ENCODE measurements at regions of chr5 and their contacts with region 1.

Region 1: DNA sequence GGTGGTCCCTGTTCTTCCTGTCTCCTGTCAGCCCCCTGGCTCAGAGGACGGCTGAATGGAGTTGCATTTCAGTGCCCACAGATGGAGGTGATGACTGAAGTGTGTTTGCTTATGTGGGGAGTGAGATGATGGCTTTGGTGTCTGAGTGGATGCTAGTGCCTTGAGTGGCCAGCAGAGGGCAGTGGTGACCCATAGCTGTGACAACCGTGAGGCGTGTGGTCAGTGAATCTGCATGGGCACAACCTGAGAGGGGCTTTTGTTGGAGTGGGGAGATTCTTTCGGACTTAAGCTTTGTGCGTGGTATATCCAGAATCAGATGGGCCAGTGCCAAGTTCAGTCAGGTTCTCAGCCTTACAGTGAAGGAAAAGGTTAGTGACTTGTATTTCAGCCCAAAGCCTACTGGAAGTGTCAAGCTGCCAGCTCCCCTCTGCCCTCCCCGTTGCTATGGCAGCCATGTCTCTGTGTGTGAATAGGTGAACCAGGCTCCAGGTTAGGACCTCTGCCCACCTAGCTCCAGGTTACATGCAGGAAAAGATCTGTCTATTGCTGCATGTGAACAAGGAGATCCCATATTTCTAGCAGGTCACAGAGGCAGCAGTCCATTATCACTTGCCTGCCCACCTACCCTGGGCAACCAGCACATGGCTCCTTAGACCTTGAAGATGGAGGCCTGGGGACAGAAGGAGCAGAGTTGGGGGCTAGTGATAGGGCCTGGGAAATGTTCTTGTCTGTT is 14.7 kb upstream of the CXXC5 start:
- DNase-seq: peak; percentile 79 to 90 (median 89)
- H3K4me3 ChIP-seq: peak overlapping the region in 1 of 3 donors; percentile 24
- H3K27ac ChIP-seq: peak overlapping the region in 1 of 2 donors; percentile 0
- H3K4me1 ChIP-seq: peaks cover 13 to 30% (median 17%) of the 10 kb centered on the region in 3 donors
- H3K27me3 ChIP-seq: no peaks in the 10 kb centered on the region
- CTCF ChIP-seq: peak; percentile 100

Region 2: DNA sequence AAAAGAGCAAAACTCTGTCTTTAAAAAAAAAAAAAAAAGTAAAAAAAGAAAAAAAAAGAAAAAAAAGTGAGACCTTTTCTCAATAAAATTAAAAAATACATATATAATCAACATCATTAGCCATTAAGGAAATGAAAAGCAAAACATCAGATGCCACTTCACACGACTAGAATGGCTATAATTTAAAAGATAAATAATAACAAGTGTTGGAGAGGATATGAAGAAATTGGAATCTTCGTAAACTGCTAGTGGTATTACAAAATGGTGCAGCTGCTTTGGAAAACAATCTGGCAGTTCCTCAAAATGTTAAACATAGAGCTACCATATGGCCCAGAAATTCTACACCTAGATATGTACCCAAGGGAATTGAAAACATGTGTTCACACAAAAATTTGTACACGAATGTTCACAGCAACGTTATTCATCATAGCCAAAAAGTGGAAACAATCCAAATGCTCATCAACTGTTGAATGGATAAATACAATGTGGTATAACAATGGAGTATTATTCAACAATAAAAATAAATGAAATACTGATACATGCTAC is 390.0 kb before region 1 on chr5:
- intact Hi-C with region 1: no loop called
- DNase-seq: no peak
- H3K4me3 ChIP-seq: no peak overlapping the region
- H3K27ac ChIP-seq: no peak overlapping the region
- H3K4me1 ChIP-seq: peaks cover 0 to 3% (median 0%) of the 10 kb centered on the region in 3 donors
- H3K27me3 ChIP-seq: no peaks in the 10 kb centered on the region
- CTCF ChIP-seq: no peak

Region 3: DNA sequence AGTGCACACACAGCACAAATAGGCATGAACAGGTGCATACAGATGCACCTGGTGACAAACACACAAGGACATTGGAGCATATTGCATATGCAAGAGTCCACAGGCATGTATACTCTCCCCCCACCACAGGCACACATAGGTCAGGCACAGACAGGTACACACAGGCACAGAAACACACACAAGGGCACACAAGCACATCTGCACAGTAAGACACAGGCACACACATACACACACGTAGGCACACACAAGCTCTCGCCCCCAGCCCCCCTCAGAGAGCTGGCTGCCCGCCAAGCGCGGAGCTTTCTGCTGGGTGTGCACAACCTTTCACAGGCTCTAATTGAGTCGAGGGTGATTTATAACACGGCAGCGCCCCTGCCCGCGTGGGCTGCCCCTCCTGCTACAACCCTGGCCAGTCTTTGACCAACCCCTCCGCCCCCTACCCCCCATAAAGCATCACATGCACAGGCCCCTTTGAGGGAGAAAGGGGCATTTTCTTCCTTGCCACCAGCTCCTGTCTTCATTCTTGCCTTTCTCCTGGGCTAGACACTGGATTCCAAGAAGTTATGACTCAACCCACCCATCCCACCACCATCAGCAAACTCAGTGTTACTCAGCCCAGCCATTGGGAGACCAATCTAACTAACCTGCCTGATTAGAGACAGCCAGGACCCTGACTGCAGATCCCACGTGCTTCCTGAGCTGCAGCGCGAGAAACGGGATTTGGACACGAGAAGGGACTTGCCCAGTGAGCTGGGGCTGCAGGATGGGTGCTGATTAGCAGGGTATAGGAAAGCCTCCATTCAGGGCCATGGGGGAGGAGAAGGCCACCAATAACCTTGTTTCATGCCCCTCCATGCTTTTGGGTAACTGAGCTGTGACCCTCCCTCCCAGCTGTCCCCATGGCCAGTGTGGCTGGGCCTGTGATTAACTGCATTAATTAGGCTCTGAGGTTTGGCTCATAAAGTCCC is 119.3 kb after region 1 on chr5:
- intact Hi-C with region 1: no loop called
- DNase-seq: peak in 4 of 5 donors; percentile 77 to 90 (median 80)
- H3K4me3 ChIP-seq: no peak overlapping the region
- H3K27ac ChIP-seq: no peak overlapping the region
- H3K4me1 ChIP-seq: peaks cover 4 to 8% (median 8%) of the 10 kb centered on the region in 3 donors
- H3K27me3 ChIP-seq: peaks cover 15% of the 10 kb centered on the region
- CTCF ChIP-seq: no peak

Region 4: DNA sequence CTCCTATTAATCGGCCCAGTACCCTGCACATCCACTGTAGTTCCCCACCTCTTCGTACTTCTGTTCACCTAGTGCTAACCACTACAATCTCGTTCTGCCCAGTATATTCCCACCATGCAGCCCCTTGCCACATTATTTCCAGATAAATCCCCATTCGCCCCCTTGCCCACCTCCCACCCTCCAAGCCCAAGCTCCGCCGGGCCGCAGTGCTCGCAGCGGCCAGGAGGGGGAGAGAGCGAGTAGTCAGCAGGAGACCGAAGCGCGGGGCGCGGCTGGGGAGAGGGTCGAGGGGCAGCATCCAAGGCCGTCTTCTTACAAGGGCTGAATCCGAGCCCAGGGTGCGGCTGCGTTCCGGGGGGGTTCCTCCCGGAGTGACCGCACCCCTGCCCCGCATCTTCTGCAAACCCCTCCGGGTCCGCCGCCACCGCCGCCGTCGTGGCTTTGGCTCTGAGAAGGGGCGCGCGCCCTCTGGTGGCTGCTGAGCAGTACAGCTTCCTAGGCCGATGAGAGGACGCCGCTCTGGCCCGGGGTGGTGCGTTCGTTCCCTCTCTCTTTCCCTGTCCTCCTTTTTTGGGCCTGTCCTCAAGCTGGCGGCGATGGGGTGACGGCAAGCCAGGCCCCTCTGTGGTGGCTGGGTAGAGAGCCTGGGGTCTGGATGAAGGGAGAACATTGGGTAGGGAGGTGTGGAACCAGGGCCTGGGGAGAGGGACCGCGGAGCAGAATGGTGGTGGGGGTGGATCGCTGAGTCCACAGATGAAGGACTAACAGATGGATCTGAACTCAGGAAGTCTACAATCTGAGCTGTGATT is 132.2 kb after region 1 on chr5:
- intact Hi-C with region 1: loop called (anchors 5 kb)
- DNase-seq: peak; percentile 83 to 93 (median 88)
- H3K4me3 ChIP-seq: peak overlapping the region in 2 of 3 donors; percentile 21 to 61
- H3K27ac ChIP-seq: peak overlapping the region in 1 of 2 donors; percentile 22
- H3K4me1 ChIP-seq: peaks cover 0 to 18% (median 8%) of the 10 kb centered on the region in 3 donors
- H3K27me3 ChIP-seq: no peaks in the 10 kb centered on the region
- CTCF ChIP-seq: peak; percentile 87

Region 5: DNA sequence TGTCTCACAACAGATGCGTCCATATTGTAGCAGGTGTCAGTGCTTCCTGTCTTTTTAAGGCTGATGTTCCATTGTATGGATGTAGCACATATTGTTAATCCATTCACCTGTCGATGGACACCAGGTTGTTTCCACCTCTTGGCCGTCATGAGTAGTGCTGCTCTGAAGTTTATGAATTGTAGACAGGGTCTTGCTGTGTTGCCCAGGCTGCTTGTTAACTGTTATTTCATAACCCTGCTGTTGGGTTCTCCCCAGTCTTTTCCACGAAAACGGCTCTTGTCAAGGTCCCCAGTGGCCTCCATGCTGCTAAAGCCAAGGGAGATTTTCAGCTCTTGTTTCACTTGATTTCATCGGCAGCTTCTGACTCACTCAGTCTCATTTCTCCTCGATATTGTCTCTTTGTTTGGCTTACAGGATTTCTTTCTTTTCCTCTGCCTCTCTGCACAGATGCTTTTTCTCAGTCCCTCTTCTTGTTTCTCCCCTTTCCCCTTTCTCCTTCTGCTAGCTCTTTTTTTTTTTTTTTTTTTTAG is 150.0 kb after region 1 on chr5:
- intact Hi-C with region 1: no loop called
- DNase-seq: no peak
- H3K4me3 ChIP-seq: no peak overlapping the region
- H3K27ac ChIP-seq: no peak overlapping the region
- H3K4me1 ChIP-seq: peaks cover 0 to 2% (median 0%) of the 10 kb centered on the region in 3 donors
- H3K27me3 ChIP-seq: no peaks in the 10 kb centered on the region
- CTCF ChIP-seq: no peak